ENCODE measurements at regions of chr6 and their contacts with region 1.

Region 1: DNA sequence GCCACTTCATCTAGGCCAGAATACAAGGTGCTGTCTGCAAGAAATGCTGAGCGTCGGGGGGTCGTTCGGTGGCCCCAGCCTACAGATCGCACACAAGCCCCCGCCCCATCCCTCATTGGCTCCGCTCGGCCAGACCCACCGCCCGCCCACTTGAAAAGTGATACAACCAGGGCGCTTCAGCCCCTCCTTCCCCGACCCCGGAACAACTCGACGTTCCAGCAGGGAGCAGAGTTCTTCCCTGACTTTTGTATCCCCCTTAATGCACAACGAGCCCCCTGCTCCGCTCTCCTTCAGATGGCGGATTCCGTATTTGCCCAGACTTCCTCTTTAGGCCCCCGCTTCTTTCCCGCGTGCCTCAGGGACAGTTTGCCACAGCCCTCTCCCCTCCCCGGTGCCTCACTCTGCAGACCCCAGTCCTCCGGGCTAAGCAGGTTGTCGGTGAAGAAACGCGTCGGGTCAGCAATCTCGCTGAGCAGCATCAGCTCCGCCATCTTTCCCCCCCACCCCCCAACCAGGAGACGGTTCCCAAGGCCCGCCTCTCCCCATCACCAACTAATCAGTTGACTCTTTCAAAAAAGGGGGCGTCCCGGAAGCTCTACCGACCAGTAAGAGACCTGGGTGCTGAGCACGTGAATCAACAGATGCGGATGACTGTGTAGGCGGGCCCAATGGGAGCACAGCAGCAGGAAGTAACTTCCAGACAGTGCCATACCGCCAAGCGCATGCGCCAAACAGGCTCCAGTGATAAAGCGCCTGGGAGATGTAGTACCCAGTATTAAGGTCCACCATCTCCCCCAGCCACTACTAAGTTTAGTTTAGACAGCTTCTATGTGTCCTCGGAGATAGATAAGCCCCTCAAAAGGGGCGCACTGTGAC is at the start of gene ATF6B:
- H3K4me3 ChIP-seq: peak within 1 kb of the TSS; percentile 80
- H3K27ac ChIP-seq: peak within 1 kb of the TSS; percentile 84
- H3K4me1 ChIP-seq: peaks cover 13% of the 10 kb centered on the region
- CTCF ChIP-seq: no peak; the same call in 1 of the 2 replicates

Region 2: GRCh38 chr6:31689249-31690110 is 438.5 kb before region 1 on chr6:
- CTCF ChIA-PET with region 1: no interaction called
- POLR2A ChIA-PET with region 1: interaction called, 10 read pairs
- H3K4me3 ChIP-seq: no peak overlapping the region
- H3K27ac ChIP-seq: no peak overlapping the region
- H3K4me1 ChIP-seq: no peaks in the 10 kb centered on the region
- CTCF ChIP-seq: no peak; the same call in 1 of the 2 replicates

Region 3: DNA sequence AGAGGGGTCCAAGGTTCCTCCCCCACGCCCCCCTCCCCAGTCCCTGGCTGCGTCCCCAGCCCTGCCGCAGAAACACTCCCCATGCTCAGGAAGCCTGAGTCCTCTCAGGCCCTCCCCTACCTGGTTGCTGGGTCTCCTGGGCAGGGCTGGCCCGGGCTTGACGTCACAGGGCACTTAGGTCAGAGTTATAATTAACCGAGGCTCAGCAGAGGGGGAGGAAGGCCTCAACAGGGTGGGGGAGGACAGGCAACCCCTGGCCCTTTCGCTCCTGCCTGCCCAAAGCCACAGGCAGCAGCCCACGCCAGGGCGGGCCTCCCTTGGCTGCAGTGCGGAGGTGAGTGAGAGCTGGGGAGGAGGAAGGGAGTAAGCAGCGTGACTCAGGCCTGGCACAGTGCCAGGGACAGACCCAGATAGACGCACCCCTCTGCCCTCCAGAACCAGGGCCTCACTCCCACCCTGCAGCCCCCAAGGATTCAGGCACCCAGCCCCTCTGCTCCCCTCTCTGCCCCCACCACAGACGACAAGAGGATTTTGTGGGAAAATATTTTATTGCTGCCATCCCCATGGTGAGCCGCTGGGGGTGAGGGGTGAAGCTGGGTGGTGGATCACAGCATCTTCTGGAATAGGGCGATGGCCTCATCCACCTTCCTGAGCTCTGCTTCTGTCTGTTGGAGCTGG is 350.8 kb before region 1 on chr6 and contains the start of gene VWA7:
- CTCF ChIA-PET with region 1: no interaction called
- POLR2A ChIA-PET with region 1: interaction called, 10 read pairs
- H3K4me3 ChIP-seq: peak within 1 kb of the TSS; percentile 21
- H3K27ac ChIP-seq: no peak within 1 kb of the TSS
- H3K4me1 ChIP-seq: peaks cover 4% of the 10 kb centered on the region
- CTCF ChIP-seq: no peak

Region 4: GRCh38 chr6:31882344-31882743 is 245.6 kb before region 1 on chr6:
- CTCF ChIA-PET with region 1: no interaction called
- POLR2A ChIA-PET with region 1: no interaction called
- H3K4me3 ChIP-seq: no peak overlapping the region
- H3K27ac ChIP-seq: no peak overlapping the region
- H3K4me1 ChIP-seq: no peaks in the 10 kb centered on the region; the same call in 1 of the 2 replicates
- CTCF ChIP-seq: no peak

Region 5: GRCh38 chr6:32148289-32149091 is 20.5 kb after region 1 on chr6:
- CTCF ChIA-PET with region 1: interaction called, 3 read pairs
- POLR2A ChIA-PET with region 1: interaction called, 38 read pairs
- H3K4me3 ChIP-seq: no peak overlapping the region
- H3K27ac ChIP-seq: no peak overlapping the region
- H3K4me1 ChIP-seq: peaks cover 9% of the 10 kb centered on the region; the same call in 1 of the 2 replicates
- CTCF ChIP-seq: no peak

Region 6: DNA sequence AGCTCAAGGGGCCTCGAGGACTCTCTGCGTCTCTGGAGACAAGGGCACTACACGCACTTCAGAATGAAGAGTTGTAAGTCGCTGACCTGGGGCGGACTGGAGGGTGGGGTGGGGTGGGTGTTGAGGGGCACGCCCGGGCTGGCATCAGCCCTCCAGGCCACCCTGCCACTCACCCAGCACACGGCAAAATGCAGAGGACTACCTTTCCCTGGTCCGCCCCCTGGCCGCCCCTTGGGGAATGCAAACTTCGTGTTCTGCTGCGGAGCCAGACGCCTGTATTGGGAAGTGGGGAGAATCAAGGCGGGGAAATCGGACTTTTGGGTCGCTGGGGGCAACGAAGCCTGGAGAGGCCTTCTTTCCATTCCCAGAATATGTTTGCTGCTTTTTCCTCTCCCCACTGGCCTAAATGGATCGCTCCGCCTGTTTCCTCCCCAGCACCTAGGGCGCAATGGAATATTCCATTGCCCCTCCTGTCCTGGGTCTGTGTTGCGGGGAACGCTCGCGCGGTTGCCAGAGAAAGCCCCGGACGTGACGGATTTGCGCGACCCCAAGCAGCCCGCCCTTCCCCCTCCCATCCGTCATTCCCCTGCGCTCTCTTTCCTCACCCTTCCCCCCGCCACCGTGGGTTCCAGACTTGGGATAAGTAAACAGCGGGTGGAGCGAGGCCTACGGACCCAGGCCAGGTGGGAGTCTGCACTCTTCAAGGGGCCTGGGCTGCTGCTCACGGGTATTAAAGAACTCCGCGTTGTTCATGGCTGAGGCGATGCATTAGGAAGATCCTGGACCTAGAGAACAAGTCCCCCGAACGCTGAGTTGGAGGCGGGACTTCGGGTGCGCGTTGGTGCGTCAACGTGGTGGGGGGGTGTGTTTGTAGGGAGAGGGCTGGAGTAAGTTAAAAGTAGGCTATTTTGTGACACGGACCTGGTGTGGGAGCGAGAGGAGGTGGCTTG is 25.9 kb after region 1 on chr6 and contains the start of gene PPT2:
- CTCF ChIA-PET with region 1: interaction called, 9 read pairs
- POLR2A ChIA-PET with region 1: interaction called, 38 read pairs
- H3K4me3 ChIP-seq: peak within 1 kb of the TSS; percentile 66
- H3K27ac ChIP-seq: peak within 1 kb of the TSS; percentile 80
- H3K4me1 ChIP-seq: peaks cover 7% of the 10 kb centered on the region; the same call in 1 of the 2 replicates
- CTCF ChIP-seq: 0 out of 2 replicates have a peak, but pooled peaks have one; percentile 37

Region 7: DNA sequence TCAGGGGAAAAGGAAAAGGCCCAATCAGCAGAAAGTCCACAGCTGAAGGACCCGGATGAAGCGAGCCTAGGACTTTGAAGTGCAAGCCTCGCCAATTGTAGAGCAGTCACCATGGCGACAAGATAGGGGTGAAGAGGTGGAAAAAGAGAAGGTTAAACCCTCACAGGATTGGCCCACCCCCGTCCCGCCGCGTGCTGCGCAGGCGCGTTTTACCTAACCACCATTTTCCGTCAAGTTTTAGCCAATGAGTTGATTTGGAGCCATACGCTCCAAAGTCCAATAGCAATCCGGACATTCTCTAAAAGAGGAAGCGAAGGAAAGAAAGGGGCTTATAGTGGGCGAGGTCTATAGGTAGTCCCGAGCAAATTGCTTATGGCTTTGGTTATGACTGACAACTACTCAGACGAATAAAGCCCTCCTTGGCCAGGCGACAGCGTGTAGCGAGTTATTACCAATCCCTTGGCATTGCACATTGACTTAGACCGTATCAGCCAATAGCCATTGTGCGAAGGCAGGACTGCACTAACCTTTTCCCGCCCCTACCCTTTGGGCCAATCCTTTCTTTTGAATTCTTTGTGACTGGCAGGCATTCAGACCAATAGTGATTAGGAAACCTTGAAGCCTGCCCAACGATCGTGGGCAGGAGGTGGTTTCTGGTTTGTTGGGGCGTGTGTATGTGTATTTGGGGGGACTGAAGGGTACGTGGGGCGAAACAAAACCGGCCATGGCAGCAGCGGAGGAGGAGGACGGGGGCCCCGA is 50.0 kb after region 1 on chr6 and contains the start of gene RNF5:
- CTCF ChIA-PET with region 1: no interaction called
- POLR2A ChIA-PET with region 1: interaction called, 38 read pairs
- H3K4me3 ChIP-seq: peak within 1 kb of the TSS; percentile 68
- H3K27ac ChIP-seq: peak within 1 kb of the TSS; percentile 80
- H3K4me1 ChIP-seq: peaks cover 14% of the 10 kb centered on the region
- CTCF ChIP-seq: no peak

Region 8: GRCh38 chr6:32195652-32195901 is 67.6 kb after region 1 on chr6:
- CTCF ChIA-PET with region 1: interaction called, 8 read pairs
- POLR2A ChIA-PET with region 1: interaction called, 28 read pairs
- H3K4me3 ChIP-seq: peak overlapping the region; percentile 72
- H3K27ac ChIP-seq: peak overlapping the region; percentile 97
- H3K4me1 ChIP-seq: peaks cover 4% of the 10 kb centered on the region
- CTCF ChIP-seq: peak; percentile 85

Region 9: GRCh38 chr6:32214126-32214525 is 86.2 kb after region 1 on chr6:
- CTCF ChIA-PET with region 1: no interaction called
- POLR2A ChIA-PET with region 1: no interaction called
- H3K4me3 ChIP-seq: no peak overlapping the region
- H3K27ac ChIP-seq: no peak overlapping the region
- H3K4me1 ChIP-seq: no peaks in the 10 kb centered on the region
- CTCF ChIP-seq: no peak